ENCODE measurements at regions of chr3 and their contacts with region 1.

Region 1: DNA sequence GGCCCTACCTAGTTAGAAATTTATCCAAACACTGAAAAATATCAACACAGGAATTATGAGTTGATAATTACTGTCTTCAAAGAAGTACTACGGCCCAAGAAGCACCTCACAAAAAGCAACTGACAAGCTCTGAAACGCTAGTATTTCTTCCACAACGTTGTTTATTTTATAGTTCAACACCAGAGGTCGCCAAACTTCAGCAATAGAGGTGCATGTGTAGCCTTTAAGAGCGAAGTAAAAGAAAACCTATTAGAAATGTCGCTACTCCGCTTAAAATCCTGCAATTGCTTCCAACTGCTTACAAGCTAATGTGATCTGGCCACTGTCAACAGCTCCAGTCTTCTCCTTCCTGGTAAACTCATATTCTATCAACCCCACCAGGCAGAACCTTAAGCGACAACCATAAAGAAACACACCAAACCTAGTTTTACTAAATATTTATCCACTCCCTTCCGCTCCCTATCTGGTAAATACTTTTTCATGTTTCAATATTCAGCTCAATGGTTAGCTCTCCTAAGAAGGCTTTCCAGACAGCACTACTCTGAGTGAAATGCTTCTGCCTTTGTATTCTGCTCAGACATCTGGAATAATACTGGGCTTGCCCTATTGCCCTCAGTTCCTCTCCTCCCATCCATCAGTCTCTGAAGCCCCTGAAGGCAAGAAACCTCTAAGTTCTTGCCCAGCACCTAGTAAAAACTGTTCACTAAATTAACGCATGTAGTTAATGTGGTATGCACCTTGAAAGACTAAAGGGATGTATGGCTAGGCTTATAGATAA is 110.2 kb downstream of the NR1I2 start:
- DNase-seq: peak; percentile 68
- ATAC-seq: peak; percentile 80
- H3K4me3 Mint-ChIP-seq: no peak overlapping the region
- H3K27ac Mint-ChIP-seq: no peak overlapping the region
- H3K4me1 Mint-ChIP-seq: peaks cover 4% of the 10 kb centered on the region
- H3K27me3 Mint-ChIP-seq: no peaks in the 10 kb centered on the region

Region 2: DNA sequence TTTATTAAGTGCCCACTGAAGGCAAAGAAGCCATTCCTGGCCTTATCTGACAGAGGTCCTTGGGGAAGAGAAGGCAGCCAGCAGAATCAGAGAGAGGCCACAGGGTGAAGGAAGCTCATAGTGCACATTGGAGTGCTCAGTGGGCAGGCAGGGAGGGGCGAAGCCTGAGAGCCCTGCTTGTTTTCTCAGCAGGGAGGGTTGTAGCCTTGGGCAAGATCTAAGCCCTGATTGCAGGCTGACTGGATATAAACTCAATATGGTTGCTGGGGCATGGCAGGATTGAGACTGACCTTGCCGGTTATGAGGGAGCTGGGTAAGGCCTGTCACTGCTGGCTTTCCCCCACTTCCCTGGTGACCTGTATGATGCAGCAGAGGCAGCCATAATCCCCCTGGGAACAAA is 850.0 kb before region 1 on chr3:
- CTCF ChIA-PET with region 1: no interaction called
- POLR2A ChIA-PET with region 1: no interaction called
- DNase-seq: no peak
- ATAC-seq: no peak
- H3K4me3 Mint-ChIP-seq: no peak overlapping the region
- H3K27ac Mint-ChIP-seq: no peak overlapping the region
- H3K4me1 Mint-ChIP-seq: no peaks in the 10 kb centered on the region
- H3K27me3 Mint-ChIP-seq: peaks cover 18% of the 10 kb centered on the region

Region 3: GRCh38 chr3:120147072-120147871 is 255.1 kb after region 1 on chr3:
- CTCF ChIA-PET with region 1: interaction called, 61 read pairs
- POLR2A ChIA-PET with region 1: interaction called, 3 read pairs
- DNase-seq: peak; percentile 58
- ATAC-seq: peak; percentile 82
- H3K4me3 Mint-ChIP-seq: no peak overlapping the region
- H3K27ac Mint-ChIP-seq: no peak overlapping the region
- H3K4me1 Mint-ChIP-seq: peaks cover 22% of the 10 kb centered on the region
- H3K27me3 Mint-ChIP-seq: no peaks in the 10 kb centered on the region

Region 4: GRCh38 chr3:120198305-120198878 is 306.3 kb after region 1 on chr3:
- CTCF ChIA-PET with region 1: interaction called, 10 read pairs
- POLR2A ChIA-PET with region 1: no interaction called
- DNase-seq: no peak
- ATAC-seq: no peak
- H3K4me3 Mint-ChIP-seq: no peak overlapping the region
- H3K27ac Mint-ChIP-seq: no peak overlapping the region
- H3K4me1 Mint-ChIP-seq: no peaks in the 10 kb centered on the region
- H3K27me3 Mint-ChIP-seq: no peaks in the 10 kb centered on the region

Measured in activated CD8-positive, alpha-beta T cell treated with anti-CD3 and anti-CD28 coated beads, Interleukin-2, amount 10 ng/mL, durations not matched to agents 7 days and 5 days (primary cell).